ENCODE measurements at regions of chr6 and their contacts with region 1.

Region 1: GRCh38 chr6:142692942-142693341 is 252.0 kb downstream of the HIVEP2 start:
- DNase-seq: peak; percentile 62 to 73 (median 69)
- ATAC-seq: peak; percentile 58 to 84 (median 80)
- H3K4me3 ChIP-seq: peak overlapping the region in 3 of 12 donors; percentile 7 to 8 (median 8)
- H3K27ac ChIP-seq: peak overlapping the region in 2 of 12 donors; percentile 3 to 12
- H3K4me1 ChIP-seq: peaks cover 0 to 42% (median 5%) of the 10 kb centered on the region in 12 donors
- H3K27me3 ChIP-seq: no peaks in the 10 kb centered on the region
- CTCF ChIP-seq: peak; percentile 87 to 98 (median 94)
- POLR2A ChIP-seq: no peak

Region 2: DNA sequence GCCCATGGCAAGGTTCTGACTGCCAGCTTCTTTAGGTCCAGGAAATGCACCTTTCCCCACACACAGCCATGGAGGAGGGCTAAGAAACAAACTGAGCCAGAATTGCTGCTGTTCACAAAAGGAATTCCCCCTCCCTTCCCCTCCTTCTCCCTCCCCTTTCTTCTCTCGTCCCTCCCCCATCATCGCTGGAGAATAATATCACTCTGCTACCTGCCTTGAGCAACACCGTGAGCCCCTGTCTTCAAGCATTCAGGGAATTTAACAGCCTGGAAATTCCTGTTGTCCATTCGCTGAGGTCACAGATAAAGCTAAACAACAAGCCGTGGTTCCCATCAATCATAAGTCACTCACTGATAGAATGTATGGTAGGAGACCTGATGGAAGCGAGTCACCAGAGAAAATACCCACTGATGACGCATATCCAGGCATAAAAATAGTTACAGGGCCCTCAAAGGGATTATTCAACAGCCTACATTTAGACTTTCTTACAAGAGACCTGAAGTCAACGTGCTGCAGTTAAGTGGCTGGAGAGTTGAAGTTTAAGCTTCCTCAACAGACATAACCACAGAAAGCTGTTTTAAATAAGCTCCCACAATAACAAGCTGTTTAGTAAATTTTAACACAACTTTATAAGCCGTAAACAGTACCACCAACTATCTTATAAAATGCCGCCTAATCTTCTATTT is 192.4 kb after region 1 on chr6:
- intact Hi-C with region 1: loop called in 5 of 10 experiments (anchors 5 to 10 kb)
- DNase-seq: peak in 3 of 5 donors; percentile 38 to 67 (median 48)
- ATAC-seq: peak; percentile 89 to 97 (median 94)
- H3K4me3 ChIP-seq: peak overlapping the region in 10 of 12 donors; percentile 23 to 59 (median 50)
- H3K27ac ChIP-seq: peak overlapping the region; percentile 7 to 79 (median 70)
- H3K4me1 ChIP-seq: peaks cover 7 to 66% (median 45%) of the 10 kb centered on the region in 12 donors
- H3K27me3 ChIP-seq: no peaks in the 10 kb centered on the region
- CTCF ChIP-seq: no peak
- POLR2A ChIP-seq: peak in 1 of 2 donors; percentile 5

Region 3: GRCh38 chr6:142952614-142953013 is 259.7 kb after region 1 on chr6:
- intact Hi-C with region 1: loop called in 9 of 10 experiments (anchors 5 to 10 kb)
- DNase-seq: no peak
- ATAC-seq: no peak
- H3K4me3 ChIP-seq: no peak overlapping the region
- H3K27ac ChIP-seq: no peak overlapping the region
- H3K4me1 ChIP-seq: peaks cover 0 to 14% (median 0%) of the 10 kb centered on the region in 12 donors
- H3K27me3 ChIP-seq: no peaks in the 10 kb centered on the region
- CTCF ChIP-seq: no peak
- POLR2A ChIP-seq: no peak

Region 4: DNA sequence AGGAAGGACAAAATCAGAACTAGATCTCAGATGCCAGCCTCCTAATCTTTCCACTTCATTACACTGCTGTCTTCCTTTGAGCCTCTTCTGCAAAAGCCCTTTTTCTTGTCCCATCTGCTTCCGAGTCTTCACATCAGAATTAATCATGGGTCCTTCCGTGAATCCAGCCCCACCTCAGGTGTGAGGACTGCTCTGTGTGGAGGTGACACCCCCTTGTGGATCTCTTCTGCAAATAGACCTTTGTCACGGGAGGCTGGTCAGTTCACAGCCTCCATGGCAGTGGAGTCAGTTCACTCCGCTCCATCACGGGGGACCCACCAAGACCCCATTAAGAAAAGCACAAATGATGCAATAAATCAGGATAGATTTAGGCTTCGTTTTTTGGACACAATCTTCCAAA is 586.4 kb after region 1 on chr6:
- intact Hi-C with region 1: loop called in 3 of 10 experiments (anchors 10 kb)
- DNase-seq: peak in 1 of 5 donors; percentile 33
- ATAC-seq: peak in 3 of 4 donors; percentile 65 to 89 (median 68)
- H3K4me3 ChIP-seq: no peak overlapping the region
- H3K27ac ChIP-seq: no peak overlapping the region
- H3K4me1 ChIP-seq: peaks cover 0 to 4% (median 0%) of the 10 kb centered on the region in 12 donors
- H3K27me3 ChIP-seq: no peaks in the 10 kb centered on the region
- CTCF ChIP-seq: peak in 8 of 12 donors; percentile 17 to 54 (median 38)
- POLR2A ChIP-seq: no peak

Region 5: GRCh38 chr6:143427109-143427817 is 734.3 kb after region 1 on chr6:
- intact Hi-C with region 1: loop called (anchors 1 to 5 kb)
- DNase-seq: peak; percentile 64 to 78 (median 70)
- ATAC-seq: peak; percentile 82 to 96 (median 95)
- H3K4me3 ChIP-seq: no peak overlapping the region
- H3K27ac ChIP-seq: no peak overlapping the region
- H3K4me1 ChIP-seq: no peaks in the 10 kb centered on the region
- H3K27me3 ChIP-seq: no peaks in the 10 kb centered on the region
- CTCF ChIP-seq: peak; percentile 81 to 97 (median 93)
- POLR2A ChIP-seq: no peak

Measured in heart left ventricle (tissue), 16 donors.